ENCODE measurements at regions of chr12 and their contacts with region 1.

Region 1: GRCh38 chr12:101830367-101831325 is at the start of gene GNPTAB:
- DNase-seq: peak; percentile 98
- total RNA-seq, gene GNPTAB: 37.0 to 42.8 TPM

Region 2: GRCh38 chr12:101773650-101774162 is 56.9 kb before region 1 on chr12:
- intact Hi-C with region 1: loop called (anchors 5 to 10 kb)
- DNase-seq: peak; percentile 84